Activated CD4-positive, alpha-beta T cell treated with anti-CD3 and anti-CD28 coated beads for 36 hours (primary cell): ENCODE measurements at regions of chrX and their contacts with region 1.

Region 1: DNA sequence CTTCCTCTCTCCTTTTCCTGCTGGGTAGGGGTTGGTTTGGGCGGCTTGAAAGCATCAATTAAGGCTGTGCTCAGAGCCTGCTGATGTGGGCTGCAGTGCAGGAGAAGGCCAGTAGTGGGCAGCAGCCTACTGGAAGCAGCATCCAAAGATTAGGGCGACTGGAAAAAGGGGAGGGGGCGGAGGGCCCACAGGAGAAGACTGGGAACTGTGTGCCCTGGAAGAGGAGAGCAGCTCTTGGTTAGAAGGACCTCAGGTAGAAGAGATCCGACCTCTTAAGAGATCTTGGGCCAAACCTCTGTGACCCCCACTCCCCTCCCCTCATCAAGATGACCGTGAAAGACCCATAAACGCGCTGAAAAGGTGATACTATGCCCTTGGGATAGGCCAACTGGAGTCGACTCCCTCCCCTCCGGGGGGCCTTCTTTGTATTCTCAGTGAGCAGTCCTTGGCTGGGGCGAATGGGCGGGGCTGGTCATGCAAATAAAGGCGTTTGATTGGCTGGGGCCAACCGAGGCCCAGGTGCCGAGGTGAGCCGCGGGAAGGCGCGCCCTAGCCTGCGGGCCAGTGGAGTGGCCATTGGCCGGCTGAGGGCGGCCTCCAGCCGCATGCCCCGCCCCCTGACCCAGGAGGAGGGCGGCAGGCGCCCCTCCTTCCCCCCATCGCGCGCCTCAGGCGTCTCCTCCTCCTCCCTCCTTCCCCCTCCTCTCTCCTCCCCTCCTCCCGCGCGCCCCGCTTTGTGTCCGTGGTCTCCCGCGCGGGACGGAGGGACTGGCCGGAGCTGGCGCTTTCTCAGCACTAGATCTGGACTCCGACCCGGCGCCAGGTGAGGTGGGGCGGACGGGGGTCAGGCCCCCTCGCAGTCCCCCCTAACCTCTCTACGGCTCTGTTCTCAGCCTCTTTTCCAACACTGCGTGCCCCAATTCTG is 10.1 kb downstream of the DLG3 start:
- DNase-seq: peak; percentile 82
- ATAC-seq: peak; percentile 65
- H3K4me3 Mint-ChIP-seq: peak overlapping the region; percentile 80
- H3K27ac Mint-ChIP-seq: peak overlapping the region; percentile 87
- H3K4me1 Mint-ChIP-seq: peaks cover 26% of the 10 kb centered on the region
- H3K27me3 Mint-ChIP-seq: no peaks in the 10 kb centered on the region

Region 2: GRCh38 chrX:70508296-70508911 is 53.7 kb after region 1 on chrX:
- CTCF ChIA-PET with region 1: interaction called, 3 read pairs
- POLR2A ChIA-PET with region 1: interaction called, 6 read pairs
- intact Hi-C with region 1: loop called in 1 of 2 experiments (anchors 10 kb)
- DNase-seq: peak; percentile 48
- ATAC-seq: peak; percentile 60
- H3K4me3 Mint-ChIP-seq: no peak overlapping the region
- H3K27ac Mint-ChIP-seq: peak overlapping the region; percentile 66
- H3K4me1 Mint-ChIP-seq: peaks cover 34% of the 10 kb centered on the region
- H3K27me3 Mint-ChIP-seq: no peaks in the 10 kb centered on the region

Region 3: GRCh38 chrX:70525733-70526132 is 71.0 kb after region 1 on chrX:
- CTCF ChIA-PET with region 1: no interaction called
- POLR2A ChIA-PET with region 1: no interaction called
- intact Hi-C with region 1: no loop called
- DNase-seq: no peak
- ATAC-seq: no peak
- H3K4me3 Mint-ChIP-seq: no peak overlapping the region
- H3K27ac Mint-ChIP-seq: no peak overlapping the region
- H3K4me1 Mint-ChIP-seq: peaks cover 5% of the 10 kb centered on the region
- H3K27me3 Mint-ChIP-seq: no peaks in the 10 kb centered on the region

Region 4: DNA sequence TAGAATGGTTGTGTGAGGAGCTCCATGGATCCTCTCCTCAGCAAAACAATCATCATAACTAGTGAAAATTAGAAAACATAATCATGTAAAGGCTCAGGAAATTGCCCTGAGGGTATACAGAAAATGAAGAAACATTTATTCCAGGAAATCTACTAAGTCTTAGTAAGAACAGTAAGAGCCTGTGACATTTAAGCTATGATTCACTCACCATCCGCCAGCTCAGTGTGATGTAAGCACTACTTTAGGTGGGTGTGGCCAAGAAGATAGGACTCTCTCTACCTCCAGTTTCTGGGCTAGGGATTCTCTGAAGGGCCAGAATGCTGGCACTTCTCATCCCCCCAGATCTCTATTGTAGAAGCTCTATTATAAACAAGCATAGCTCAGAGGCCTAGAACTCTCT is 137.4 kb after region 1 on chrX:
- CTCF ChIA-PET with region 1: no interaction called
- POLR2A ChIA-PET with region 1: no interaction called
- intact Hi-C with region 1: loop called (anchors 2 to 10 kb)
- DNase-seq: peak; percentile 61
- ATAC-seq: peak; percentile 99
- H3K4me3 Mint-ChIP-seq: no peak overlapping the region
- H3K27ac Mint-ChIP-seq: peak overlapping the region; percentile 17
- H3K4me1 Mint-ChIP-seq: peaks cover 15% of the 10 kb centered on the region
- H3K27me3 Mint-ChIP-seq: no peaks in the 10 kb centered on the region

Region 5: DNA sequence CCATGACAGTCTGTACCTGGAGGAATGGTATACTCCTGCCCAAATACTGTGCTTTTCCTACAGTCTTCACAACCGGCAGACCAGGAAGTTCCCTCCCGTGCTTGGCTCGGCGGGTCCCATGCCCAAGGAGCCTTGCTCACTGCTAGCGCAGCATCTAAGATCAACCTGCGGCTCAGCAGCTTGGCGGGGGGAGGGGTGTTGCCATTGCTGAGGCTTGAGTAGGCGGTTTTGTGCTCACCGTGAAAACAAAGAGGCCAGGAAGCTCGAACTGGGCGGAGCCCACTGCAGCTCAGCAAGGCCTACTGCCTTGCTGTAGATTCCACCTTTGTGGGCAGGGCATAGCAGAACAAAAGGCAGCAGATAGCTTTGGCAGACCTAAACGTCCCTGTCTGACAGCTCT is 301.1 kb after region 1 on chrX:
- CTCF ChIA-PET with region 1: no interaction called
- POLR2A ChIA-PET with region 1: no interaction called
- intact Hi-C with region 1: loop called in 1 of 2 experiments (anchors 2 kb)
- DNase-seq: peak; percentile 81
- ATAC-seq: peak; percentile 78
- H3K4me3 Mint-ChIP-seq: no peak overlapping the region
- H3K27ac Mint-ChIP-seq: peak overlapping the region; percentile 60
- H3K4me1 Mint-ChIP-seq: peaks cover 23% of the 10 kb centered on the region
- H3K27me3 Mint-ChIP-seq: no peaks in the 10 kb centered on the region

Region 6: GRCh38 chrX:71254092-71254941 is 799.6 kb after region 1 on chrX and contains the start of gene ZMYM3:
- CTCF ChIA-PET with region 1: no interaction called
- POLR2A ChIA-PET with region 1: no interaction called
- intact Hi-C with region 1: loop called in 1 of 2 experiments (anchors 2 kb)
- DNase-seq: peak; percentile 87
- ATAC-seq: peak; percentile 86
- H3K4me3 Mint-ChIP-seq: peak within 1 kb of the TSS; percentile 84
- H3K27ac Mint-ChIP-seq: peak within 1 kb of the TSS; percentile 83
- H3K4me1 Mint-ChIP-seq: peaks cover 29% of the 10 kb centered on the region
- H3K27me3 Mint-ChIP-seq: no peaks in the 10 kb centered on the region
- total RNA-seq, gene ZMYM3: 22.6 to 22.8 TPM